GM13976 (cell line): ENCODE measurements at regions of chr13 and their contacts with region 1.

Region 1: DNA sequence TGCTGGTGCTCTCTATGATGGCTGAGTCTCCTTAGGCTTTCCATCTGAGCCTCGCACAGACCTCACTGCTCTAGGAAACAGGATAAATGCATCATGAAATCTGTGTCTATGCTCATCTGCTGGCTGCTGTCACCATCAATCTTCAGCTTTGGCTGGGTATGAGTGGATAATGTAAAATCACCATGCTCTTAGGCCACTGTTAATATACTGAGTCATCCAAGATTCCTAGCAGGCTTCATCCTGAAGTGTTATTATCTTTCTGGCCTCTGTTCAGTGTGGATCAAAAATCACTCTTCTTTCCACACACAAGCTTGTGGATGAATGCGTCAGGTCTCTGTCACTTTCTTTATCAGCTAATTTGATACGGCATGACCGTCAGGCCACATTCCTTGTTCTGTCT is 317.4 kb downstream of the NALCN start:
- DNase-seq: no peak
- CTCF ChIP-seq: no peak

Region 2: DNA sequence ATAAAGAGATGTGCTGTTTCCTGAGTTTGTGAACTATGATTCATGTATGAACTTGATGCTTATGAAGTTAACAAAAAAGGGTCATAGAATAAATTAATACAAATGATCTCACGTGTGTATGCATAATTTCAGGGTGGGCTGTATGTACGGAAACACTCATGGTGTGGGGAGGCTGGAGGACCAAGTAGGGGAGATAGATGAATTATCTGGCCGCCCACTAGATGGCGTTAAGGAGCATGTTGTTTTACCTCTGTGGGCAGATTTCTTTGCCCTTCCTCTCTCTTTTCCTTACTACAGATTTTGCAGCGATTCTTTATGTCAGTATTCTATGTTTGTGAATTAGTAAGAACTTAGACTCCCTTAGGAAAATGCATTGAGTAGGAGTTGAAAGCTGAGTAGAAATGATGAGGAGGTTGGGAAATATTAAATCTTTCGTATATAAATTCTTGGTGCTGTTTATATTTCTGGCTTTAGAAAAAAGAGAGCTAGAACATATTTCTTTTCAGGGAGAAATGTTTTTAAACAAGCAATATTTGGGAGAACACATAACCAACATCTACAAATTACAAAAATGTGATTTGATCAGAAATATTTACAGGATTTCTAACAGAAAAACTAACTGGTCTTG is 376.9 kb before region 1 on chr13:
- in situ Hi-C with region 1: loop called (anchors 25 kb)
- DNase-seq: peak; percentile 61
- CTCF ChIP-seq: peak; percentile 66

Region 3: GRCh38 chr13:101211261-101211660 is 112.4 kb after region 1 on chr13:
- in situ Hi-C with region 1: no loop called
- DNase-seq: no peak
- CTCF ChIP-seq: no peak

Region 4: GRCh38 chr13:102128216-102128810 is 1029.4 kb after region 1 on chr13:
- in situ Hi-C with region 1: no loop called
- DNase-seq: no peak
- CTCF ChIP-seq: no peak